ENCODE measurements at regions of chr19 and their contacts with region 1.

Region 1: DNA sequence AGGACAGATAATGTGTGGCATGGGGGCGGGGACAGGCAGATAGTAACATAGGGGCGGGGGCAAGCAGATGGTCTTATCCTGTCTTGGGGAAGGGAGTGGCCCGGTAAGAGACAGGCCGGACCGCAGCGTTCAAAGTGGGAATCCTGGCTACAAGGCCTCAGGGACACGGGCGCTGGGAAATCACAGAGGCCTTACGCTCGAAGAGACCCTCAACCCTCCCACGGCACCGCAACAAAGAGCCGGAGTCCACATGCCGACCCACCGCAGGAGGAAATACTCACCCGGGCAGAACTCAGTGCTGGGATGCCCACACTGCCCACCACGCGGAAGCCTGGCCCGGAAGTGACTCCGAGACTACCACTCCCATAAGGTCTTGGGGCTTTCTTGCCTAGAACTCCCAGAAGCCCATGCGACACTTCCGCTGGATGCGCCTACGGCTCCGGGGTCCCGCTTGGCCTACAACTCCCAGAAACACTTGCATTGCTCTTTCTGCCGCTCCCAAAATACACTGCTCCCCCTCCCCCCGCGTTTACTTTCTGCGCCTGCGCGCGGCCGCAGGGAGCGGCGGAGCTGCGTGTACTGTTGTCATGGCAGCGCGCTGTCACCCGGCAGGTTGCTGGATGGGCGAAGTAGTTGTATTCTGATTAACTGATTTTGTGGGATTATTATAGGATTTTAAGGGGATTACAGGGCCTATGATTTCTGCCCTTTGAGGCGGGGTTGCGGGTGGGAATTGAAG is at the start of gene CTU1:
- DNase-seq: peak; percentile 99
- H3K4me3 ChIP-seq: peak within 1 kb of the TSS; percentile 58 to 66 (median 61)
- H3K27ac ChIP-seq: peak within 1 kb of the TSS in 1 of 3 donors; percentile 4
- H3K4me1 ChIP-seq: peaks cover 10 to 17% of the 10 kb centered on the region in 2 donors
- H3K27me3 ChIP-seq: no peaks in the 10 kb centered on the region
- CTCF ChIP-seq: peak in 2 of 6 experiments; percentile 37 to 42
- POLR2A ChIP-seq: peak in 1 of 2 donors; percentile 61
- total RNA-seq, gene CTU1: 7.5 to 13.6 (median 9.3) TPM

Region 2: DNA sequence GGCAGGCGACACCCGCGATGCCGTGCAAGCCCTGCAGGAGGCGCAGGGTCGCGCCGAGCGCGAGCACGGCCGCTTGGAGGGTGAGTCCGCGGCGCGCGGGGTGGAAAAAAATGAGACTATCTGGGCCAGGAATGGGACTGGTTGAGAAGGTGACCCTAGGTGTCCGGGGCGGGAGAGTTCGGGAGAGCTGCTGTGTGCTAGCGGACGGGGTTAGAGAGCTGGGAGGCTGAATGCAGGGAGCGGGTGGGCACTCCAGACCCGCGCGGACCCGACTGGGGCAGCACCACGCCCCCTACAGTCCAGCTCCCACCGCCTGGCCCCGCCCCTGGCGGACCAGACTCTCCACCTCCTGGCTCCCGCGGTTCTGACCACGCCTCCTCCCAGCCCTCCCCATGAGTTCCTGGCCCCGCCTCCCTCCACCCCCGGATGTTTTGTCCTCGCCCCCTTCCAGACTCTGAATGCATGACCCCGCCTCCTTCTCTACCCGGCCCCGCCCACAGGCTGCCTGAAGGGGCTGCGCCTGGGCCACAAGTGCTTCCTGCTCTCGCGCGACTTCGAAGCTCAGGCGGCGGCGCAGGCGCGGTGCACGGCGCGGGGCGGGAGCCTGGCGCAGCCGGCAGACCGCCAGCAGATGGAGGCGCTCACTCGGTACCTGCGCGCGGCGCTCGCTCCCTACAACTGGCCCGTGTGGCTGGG is 383.6 kb before region 1 on chr19:
- intact Hi-C with region 1: loop called (anchors 5 kb)
- DNase-seq: peak; percentile 99
- H3K4me3 ChIP-seq: peak overlapping the region; percentile 13 to 83 (median 55)
- H3K27ac ChIP-seq: peak overlapping the region in 2 of 3 donors; percentile 66 to 72
- H3K4me1 ChIP-seq: peaks cover 19 to 21% of the 10 kb centered on the region in 2 donors
- H3K27me3 ChIP-seq: no peaks in the 10 kb centered on the region
- CTCF ChIP-seq: peak; percentile 58 to 86 (median 72)
- POLR2A ChIP-seq: peak; percentile 37 to 90

Region 3: DNA sequence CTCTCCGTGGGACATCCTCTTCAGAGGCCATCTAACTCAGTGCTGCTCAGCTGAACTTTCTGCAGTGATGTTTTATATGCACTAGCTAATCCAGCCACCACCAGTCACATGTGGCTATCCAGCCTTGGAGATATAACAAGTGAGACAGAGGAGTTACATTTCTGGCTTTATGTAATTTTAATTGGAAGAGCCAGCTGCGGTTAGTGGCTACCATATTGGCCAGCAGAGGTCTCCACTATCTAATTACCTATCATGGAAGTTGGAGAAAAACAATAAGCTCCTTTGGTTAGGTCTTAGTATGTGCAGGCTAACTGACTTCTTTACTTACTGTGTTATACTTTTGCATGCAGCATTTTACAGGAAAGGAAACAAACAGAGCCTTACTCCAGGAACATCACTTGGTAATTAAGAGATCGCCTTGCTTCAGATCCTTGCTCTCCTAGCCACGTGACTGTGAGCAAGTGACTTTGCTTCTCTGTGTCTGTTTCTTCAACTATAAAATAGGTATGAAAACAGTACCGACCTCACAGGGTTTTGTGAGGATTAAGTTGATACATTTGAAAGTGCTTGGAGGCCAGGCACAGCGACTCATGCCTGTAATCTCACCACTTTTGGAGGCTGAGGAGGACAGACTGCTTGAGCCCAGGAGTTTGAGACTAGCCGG is 87.1 kb before region 1 on chr19:
- intact Hi-C with region 1: no loop called
- DNase-seq: peak; percentile 14 to 18
- H3K4me3 ChIP-seq: no peak overlapping the region
- H3K27ac ChIP-seq: no peak overlapping the region
- H3K4me1 ChIP-seq: peaks cover 5 to 20% of the 10 kb centered on the region in 2 donors
- H3K27me3 ChIP-seq: peaks cover 24% of the 10 kb centered on the region
- CTCF ChIP-seq: peak in 5 of 6 experiments; percentile 24 to 68 (median 65)
- POLR2A ChIP-seq: no peak

Region 4: GRCh38 chr19:51219307-51219706 is 111.1 kb after region 1 on chr19:
- intact Hi-C with region 1: no loop called
- DNase-seq: no peak
- H3K4me3 ChIP-seq: no peak overlapping the region
- H3K27ac ChIP-seq: no peak overlapping the region
- H3K4me1 ChIP-seq: no peaks in the 10 kb centered on the region
- H3K27me3 ChIP-seq: no peaks in the 10 kb centered on the region
- CTCF ChIP-seq: no peak
- POLR2A ChIP-seq: no peak

Region 5: GRCh38 chr19:51594774-51595109 is 486.5 kb after region 1 on chr19:
- intact Hi-C with region 1: loop called (anchors 5 kb)
- DNase-seq: no peak
- H3K4me3 ChIP-seq: peak overlapping the region; percentile 26 to 65 (median 40)
- H3K27ac ChIP-seq: peak overlapping the region in 1 of 3 donors; percentile 10
- H3K4me1 ChIP-seq: peaks cover 8 to 9% of the 10 kb centered on the region in 2 donors
- H3K27me3 ChIP-seq: no peaks in the 10 kb centered on the region
- CTCF ChIP-seq: no peak
- POLR2A ChIP-seq: peak in 1 of 2 donors; percentile 12

Measured in thyroid gland (tissue), 4 donors.